ENCODE measurements at regions of chr7 and their contacts with region 1.

Region 1: GRCh38 chr7:127534636-127535035 is 50.8 kb downstream of the GCC1 start:
- DNase-seq: no peak
- ATAC-seq: no peak
- H3K4me3 ChIP-seq: no peak overlapping the region
- H3K27ac ChIP-seq: no peak overlapping the region
- H3K4me1 ChIP-seq: no peaks in the 10 kb centered on the region
- H3K27me3 ChIP-seq: peaks cover 0 to 11% of the 10 kb centered on the region in 2 experiments; a peak in 1 of 5 replicates
- CTCF ChIP-seq: no peak
- EP300 ChIP-seq: no peak
- POLR2A ChIP-seq: no peak
- RAD21 ChIP-seq: no peak

Region 2: GRCh38 chr7:127486654-127487053 is 48.0 kb before region 1 on chr7:
- CTCF ChIA-PET with region 1: no interaction called
- POLR2A ChIA-PET with region 1: no interaction called
- in situ Hi-C with region 1: no loop called
- intact Hi-C with region 1: loop called (anchors 1 kb)
- DNase-seq: no peak
- ATAC-seq: peak; percentile 36; the same call in 1 of the 3 replicates
- H3K4me3 ChIP-seq: no peak overlapping the region
- H3K27ac ChIP-seq: no peak overlapping the region
- H3K4me1 ChIP-seq: no peaks in the 10 kb centered on the region
- H3K27me3 ChIP-seq: no peaks in the 10 kb centered on the region
- CTCF ChIP-seq: no peak
- EP300 ChIP-seq: no peak
- POLR2A ChIP-seq: no peak
- RAD21 ChIP-seq: no peak

Region 3: DNA sequence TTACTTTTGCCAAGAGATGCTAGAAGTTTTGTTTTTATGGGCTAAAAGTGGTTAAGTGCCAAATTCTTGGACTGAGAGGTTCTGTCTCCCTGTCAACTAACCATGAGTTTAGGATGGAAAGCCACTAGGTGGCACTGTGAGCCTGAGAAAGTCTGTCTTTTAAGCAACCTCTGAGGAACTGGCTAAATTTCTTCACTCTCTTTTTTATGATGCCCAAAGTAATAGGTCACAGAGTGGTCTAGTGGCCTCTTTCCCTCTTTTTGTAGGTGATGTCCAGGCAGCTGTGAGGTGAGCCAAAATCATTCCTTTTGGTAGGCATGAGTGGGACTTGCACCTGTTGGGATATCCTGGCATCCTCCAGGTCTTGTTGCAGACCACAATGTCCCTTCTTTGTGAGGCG is 174.2 kb after region 1 on chr7:
- CTCF ChIA-PET with region 1: no interaction called
- POLR2A ChIA-PET with region 1: no interaction called
- in situ Hi-C with region 1: no loop called
- intact Hi-C with region 1: no loop called
- DNase-seq: peak; percentile 57
- ATAC-seq: peak; percentile 86
- H3K4me3 ChIP-seq: no peak overlapping the region
- H3K27ac ChIP-seq: no peak overlapping the region
- H3K4me1 ChIP-seq: no peaks in the 10 kb centered on the region
- H3K27me3 ChIP-seq: no peaks in the 10 kb centered on the region
- CTCF ChIP-seq: peak; percentile 75
- EP300 ChIP-seq: no peak
- POLR2A ChIP-seq: no peak
- RAD21 ChIP-seq: no peak

Region 4: DNA sequence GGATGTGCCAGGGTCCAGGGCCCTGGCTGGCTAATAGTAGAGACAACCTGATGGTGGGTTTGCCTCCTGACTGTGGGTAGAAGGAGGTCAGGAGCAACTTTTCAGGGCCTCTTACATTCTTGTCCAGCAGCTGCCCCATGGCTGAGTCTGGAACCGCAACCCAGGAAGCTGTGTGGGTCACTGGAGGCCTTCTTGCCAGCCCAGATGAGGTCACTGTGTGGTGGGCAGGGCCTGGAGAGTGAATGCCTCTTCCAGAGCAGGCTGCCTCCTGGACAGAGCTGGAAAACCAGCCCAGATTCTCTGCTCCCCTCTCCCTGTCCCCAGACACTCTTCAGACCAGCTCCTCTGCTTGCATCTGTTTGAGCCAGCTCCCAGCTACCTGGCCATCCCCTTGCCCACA is 663.0 kb after region 1 on chr7:
- CTCF ChIA-PET with region 1: no interaction called
- POLR2A ChIA-PET with region 1: no interaction called
- in situ Hi-C with region 1: no loop called
- intact Hi-C with region 1: no loop called
- DNase-seq: no peak
- ATAC-seq: no peak
- H3K4me3 ChIP-seq: no peak overlapping the region
- H3K27ac ChIP-seq: no peak overlapping the region
- H3K4me1 ChIP-seq: no peaks in the 10 kb centered on the region
- H3K27me3 ChIP-seq: peaks cover 7 to 31% of the 10 kb centered on the region in 2 experiments; a peak in 4 of 5 replicates
- CTCF ChIP-seq: no peak
- EP300 ChIP-seq: no peak
- POLR2A ChIP-seq: no peak
- RAD21 ChIP-seq: no peak

Measured in HepG2 (cell line).